Astrocyte of the cerebellum (primary cell): ENCODE measurements at regions of chr9 and their contacts with region 1.

Region 1: GRCh38 chr9:69376651-69377050 is 51.6 kb downstream of the ENTREP1 start:
- DNase-seq: peak; percentile 90
- H3K4me3 ChIP-seq: no peak overlapping the region
- CTCF ChIP-seq: no peak

Region 2: GRCh38 chr9:69174616-69175463 is 201.8 kb before region 1 on chr9:
- in situ Hi-C with region 1: loop called (anchors 25 kb)
- DNase-seq: peak; percentile 91
- H3K4me3 ChIP-seq: peak overlapping the region; percentile 77
- CTCF ChIP-seq: no peak

Region 3: GRCh38 chr9:69279084-69279729 is 97.4 kb before region 1 on chr9:
- in situ Hi-C with region 1: loop called (anchors 25 kb)
- DNase-seq: no peak
- H3K4me3 ChIP-seq: no peak overlapping the region
- CTCF ChIP-seq: no peak

Region 4: DNA sequence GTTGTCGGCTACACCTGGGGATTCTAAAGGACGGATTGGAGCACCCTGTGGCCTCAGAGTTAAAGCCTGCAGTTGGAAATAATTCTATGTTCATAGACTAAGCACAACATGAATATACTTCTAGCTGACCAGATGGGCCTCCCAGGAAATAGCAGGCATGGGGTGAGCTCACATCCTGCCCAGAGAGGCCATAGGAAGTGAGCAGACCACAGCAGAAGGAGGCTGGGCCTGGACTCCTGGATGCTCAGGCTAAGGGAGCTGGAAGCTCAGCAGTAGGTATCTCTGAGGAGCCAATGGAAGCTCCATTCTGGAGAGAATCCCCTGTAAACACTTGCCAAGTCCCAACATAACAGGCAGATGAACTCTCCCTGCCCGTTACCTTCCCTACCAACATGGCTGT is 29.7 kb before region 1 on chr9:
- in situ Hi-C with region 1: loop called (anchors 5 kb)
- DNase-seq: no peak
- H3K4me3 ChIP-seq: no peak overlapping the region
- CTCF ChIP-seq: no peak